ENCODE measurements at regions of chr2 and their contacts with region 1.

Region 1: GRCh38 chr2:46601328-46601963 is 122.1 kb downstream of the TMEM247 start:
- DNase-seq: peak in 1 of 35 experiments; percentile 23
- ATAC-seq: no peak
- H3K4me3 ChIP-seq: no peak overlapping the region
- H3K4me3 Mint-ChIP-seq: no peak overlapping the region
- H3K27ac ChIP-seq: no peak overlapping the region
- H3K27ac Mint-ChIP-seq: no peak overlapping the region
- H3K4me1 ChIP-seq: no peaks in the 10 kb centered on the region
- H3K4me1 Mint-ChIP-seq: peaks cover 0 to 2% (median 1%) of the 10 kb centered on the region in 3 donors
- H3K27me3 ChIP-seq: no peaks in the 10 kb centered on the region
- H3K27me3 Mint-ChIP-seq: no peaks in the 10 kb centered on the region

Region 2: DNA sequence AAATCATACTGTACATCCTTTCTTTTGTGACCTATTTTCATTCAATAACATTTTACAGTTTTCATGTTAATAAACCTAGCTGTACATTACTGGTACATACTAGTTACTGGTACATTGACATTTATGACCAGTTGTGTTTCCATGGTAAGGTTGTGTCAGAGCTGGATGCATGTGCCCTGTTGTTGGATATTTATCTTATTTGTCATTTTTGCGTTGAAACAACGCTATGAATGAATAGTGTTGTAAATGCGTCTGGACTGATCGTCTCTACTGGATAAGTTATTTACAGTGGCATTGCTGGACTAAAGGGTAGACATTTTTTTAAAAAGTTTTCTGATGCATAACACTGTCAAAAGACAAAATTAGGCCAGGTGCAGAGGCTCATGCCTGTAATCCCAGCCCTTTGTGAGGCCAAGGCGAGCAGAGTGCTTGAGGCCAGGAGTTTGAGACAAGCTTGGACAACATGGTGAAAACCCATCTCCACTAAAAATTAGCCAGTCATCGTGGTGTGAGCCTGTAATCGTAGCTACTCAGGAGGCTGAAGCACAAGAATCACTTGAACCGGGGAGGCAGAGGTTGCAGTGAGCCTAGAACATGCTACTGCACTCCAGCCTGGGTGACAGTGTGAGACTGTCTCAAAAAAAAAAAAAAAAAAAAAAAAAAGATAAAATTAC is 273.9 kb after region 1 on chr2:
- CTCF ChIA-PET with region 1: interaction called in 1 of 2 experiments, 16 read pairs
- POLR2A ChIA-PET with region 1: no interaction called
- DNase-seq: no peak
- ATAC-seq: no peak
- H3K4me3 ChIP-seq: no peak overlapping the region
- H3K4me3 Mint-ChIP-seq: no peak overlapping the region
- H3K27ac ChIP-seq: no peak overlapping the region
- H3K27ac Mint-ChIP-seq: no peak overlapping the region
- H3K4me1 ChIP-seq: no peaks in the 10 kb centered on the region
- H3K4me1 Mint-ChIP-seq: no peaks in the 10 kb centered on the region
- H3K27me3 ChIP-seq: peaks cover 0 to 19% of the 10 kb centered on the region in 2 experiments
- H3K27me3 Mint-ChIP-seq: peaks cover 7 to 16% of the 10 kb centered on the region in 2 donors